Spleen (tissue), 13 donors: ENCODE measurements at regions of chr10 and their contacts with region 1.

Region 1: DNA sequence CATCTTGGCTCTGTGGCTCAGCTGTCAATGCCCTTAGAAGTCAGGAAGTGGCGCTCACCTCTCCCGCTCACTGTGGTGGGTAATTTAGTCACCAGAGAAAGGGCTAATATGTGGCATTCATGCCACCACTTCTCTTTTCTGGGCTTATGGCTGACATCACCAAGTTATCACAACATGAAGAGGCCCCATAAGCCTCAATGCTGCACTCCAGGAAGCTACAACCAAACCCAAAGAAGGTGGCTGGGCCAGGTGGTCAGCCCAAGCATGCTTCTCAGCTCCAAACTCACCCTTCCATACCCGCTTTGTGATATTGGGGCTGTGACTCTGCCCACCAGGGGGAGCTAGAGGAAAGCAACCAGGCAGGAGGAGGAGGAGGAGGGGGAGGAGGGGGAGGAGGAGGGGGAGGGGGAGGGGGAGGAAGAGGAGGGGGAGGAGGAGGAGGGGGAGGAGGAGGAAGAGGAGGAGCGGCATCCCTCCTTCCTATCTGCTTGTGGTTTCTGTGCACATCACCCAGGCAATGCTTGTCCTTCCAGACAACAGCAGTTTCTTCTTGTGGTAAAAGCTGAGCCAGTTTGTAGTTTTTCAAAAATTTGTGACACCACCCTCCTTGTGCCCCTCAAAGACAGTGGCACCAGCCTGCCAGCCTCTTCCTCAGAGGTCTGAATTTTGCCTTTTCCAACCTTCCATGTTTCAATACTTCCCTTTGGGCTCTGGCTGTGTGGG is 42.1 kb downstream of the CYP26A1 start:
- DNase-seq: peak; percentile 82
- H3K4me3 ChIP-seq: no peak overlapping the region
- H3K27ac ChIP-seq: no peak overlapping the region
- H3K4me1 ChIP-seq: peaks cover 0 to 6% (median 1%) of the 10 kb centered on the region in 6 donors
- H3K27me3 ChIP-seq: peaks cover 0 to 16% (median 0%) of the 10 kb centered on the region in 7 donors
- CTCF ChIP-seq: peak in 10 of 11 experiments; percentile 24 to 65 (median 48)
- POLR2A ChIP-seq: no peak

Region 2: DNA sequence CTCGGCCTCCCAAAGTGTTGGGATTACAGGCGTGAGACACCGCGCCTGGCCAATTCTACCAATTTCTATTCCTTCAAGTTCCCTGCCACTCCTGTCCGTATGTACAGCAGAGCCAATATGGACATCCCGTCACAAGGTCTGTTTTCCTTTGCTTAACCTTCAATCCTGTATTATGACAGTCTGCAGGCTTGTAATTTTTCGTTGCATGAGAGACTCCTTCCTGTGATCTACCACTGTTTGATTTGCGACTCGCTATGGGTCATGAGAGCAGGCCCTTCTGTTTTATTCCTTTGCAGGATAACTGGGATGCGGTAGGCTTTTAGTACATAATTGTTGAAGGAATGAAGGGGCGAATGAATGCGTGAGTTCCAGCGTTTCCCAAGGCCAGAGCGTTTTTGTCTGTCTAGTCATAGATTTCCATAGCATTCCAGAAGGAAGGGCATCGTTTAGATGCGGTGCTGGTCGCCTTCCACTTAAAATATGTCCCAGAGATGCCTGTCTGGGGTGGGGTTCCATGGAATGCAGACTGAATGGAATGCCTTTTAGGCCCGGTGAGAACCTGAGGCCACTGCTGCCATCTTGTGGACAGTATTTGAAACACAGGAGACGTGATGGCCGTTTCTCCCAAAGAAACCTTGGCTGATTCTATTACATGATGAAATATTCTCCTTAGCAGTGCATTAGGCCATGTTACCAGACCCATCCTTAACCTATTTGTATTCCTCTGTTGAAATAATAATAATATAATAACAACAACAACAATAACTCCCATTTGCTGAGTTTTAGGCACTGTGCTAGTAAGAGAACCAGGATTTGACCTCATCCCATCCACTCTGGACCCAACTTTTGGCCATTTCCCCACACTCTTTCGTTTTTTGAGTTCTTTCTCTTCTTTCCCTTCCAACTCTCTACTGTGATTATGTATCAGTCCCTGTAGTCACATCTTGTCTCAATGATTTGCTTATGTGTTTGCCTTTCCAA is 173.1 kb after region 1 on chr10:
- intact Hi-C with region 1: loop called (anchors 10 kb)
- DNase-seq: no peak
- H3K4me3 ChIP-seq: no peak overlapping the region
- H3K27ac ChIP-seq: no peak overlapping the region
- H3K4me1 ChIP-seq: peaks cover 0 to 8% (median 0%) of the 10 kb centered on the region in 6 donors
- H3K27me3 ChIP-seq: no peaks in the 10 kb centered on the region
- CTCF ChIP-seq: peak; percentile 42 to 85 (median 71)
- POLR2A ChIP-seq: no peak

Region 3: DNA sequence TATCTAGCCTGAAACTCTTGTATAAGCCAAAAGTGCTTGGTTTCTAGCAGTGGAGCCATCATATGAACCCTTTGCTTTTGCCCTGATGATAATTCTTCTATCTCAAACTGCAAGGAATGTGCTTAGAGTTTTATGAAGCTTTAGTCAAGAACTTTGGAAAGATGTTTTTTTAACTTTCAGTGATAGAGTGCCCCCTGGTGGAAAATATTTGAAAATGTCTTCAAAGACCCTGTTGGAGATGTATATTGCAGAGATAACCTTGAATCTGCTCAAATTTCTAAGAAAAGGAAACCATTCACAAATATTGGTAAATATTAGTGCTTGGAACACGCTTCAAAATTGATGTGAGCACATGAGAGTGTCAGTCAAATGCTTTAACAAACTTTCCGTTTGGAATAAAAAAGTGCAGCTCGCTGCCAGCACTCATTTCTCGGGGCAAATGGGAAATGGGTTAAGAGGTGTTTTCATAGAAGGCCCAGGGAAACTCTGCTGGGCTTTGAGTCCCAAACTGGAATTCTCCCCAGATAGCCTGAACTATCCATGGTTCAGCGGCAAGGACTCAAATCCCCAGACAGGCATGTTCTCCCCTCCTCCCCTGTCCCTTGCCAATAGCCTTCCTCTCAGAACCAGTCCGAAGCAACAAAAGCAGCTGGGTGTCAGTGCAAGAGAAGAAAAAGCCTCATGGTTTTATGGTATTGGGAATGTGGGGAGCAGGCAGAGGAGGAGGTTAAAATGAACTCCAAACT is 237.0 kb after region 1 on chr10:
- intact Hi-C with region 1: loop called (anchors 10 kb)
- DNase-seq: no peak
- H3K4me3 ChIP-seq: no peak overlapping the region
- H3K27ac ChIP-seq: no peak overlapping the region
- H3K4me1 ChIP-seq: no peaks in the 10 kb centered on the region
- H3K27me3 ChIP-seq: peaks cover 0 to 9% (median 0%) of the 10 kb centered on the region in 7 donors
- CTCF ChIP-seq: peak in 10 of 11 experiments; percentile 38 to 82 (median 66)
- POLR2A ChIP-seq: no peak